Mammary epithelial cell (primary cell): ENCODE measurements at regions of chr6 and their contacts with region 1.

Region 1: DNA sequence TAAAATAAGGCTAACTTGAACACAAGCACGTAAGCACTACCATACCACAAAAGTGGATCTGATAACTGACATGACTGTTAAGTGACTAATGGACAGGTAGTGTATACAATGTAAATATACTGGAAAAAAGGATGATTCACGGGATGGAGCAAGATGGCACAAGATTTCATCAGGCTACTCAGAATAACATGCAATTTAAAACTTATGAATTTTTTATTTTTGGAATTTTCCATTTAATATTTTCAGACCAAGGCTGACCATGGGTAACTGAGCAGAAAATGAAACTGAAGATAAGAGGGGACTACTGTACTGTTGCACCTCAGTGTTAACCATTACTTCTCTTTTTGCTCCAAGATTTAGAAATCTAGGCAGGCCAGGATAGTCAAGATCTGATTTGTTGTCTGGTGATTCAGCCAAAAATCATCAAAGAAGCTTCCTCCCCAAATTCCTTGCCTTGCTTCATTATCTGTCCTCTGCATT is 45.4 kb downstream of the TPBG start:
- DNase-seq: peak; percentile 91
- H3K4me3 ChIP-seq: peak overlapping the region in 1 of 3 experiments; percentile 21
- H3K27ac ChIP-seq: peak overlapping the region; percentile 97
- H3K4me1 ChIP-seq: peaks cover 29% of the 10 kb centered on the region
- H3K27me3 ChIP-seq: no peaks in the 10 kb centered on the region
- CTCF ChIP-seq: no peak

Region 2: DNA sequence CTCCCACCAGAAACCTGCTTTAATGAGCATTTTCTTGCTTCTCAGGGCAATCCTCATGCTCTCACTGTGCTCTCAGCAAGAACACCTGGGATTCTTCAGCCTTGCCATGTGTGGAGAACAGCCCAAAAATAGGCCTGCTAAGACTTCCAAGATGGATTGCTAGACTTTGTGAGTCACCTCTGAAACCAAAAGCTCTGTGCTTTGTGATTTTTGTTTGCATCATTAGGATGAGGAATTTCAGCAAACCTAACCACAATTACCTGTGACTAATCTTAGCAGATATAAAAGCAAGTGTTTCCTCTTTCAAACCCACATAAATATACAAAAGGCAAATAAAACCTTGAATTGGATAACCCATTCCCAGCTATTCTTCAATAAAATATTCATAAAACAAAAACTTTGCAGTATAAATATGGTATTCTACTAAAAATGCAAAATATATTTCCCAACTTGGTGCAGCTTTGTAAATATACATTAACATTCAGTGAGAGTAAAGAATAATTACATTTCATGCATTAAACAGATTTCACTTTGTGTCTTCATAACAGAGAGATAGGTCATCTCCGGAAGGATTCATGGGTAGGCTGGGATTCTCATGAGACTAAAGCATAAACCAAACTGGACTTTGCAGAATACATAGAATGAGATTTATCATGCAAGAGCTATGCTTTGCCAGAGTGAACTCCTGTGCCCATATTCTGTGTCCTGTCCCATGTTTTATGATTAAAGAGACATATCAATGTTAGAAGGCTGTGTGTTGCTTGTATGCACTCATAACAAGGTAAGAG is 11.8 kb before region 1 on chr6:
- CTCF ChIA-PET with region 1: interaction called, 4 read pairs
- dilution Hi-C with region 1: no loop called
- in situ Hi-C with region 1: no loop called
- intact Hi-C with region 1: loop called (anchors 1 kb)
- DNase-seq: peak; percentile 96
- H3K4me3 ChIP-seq: peak overlapping the region in 1 of 3 experiments; percentile 24
- H3K27ac ChIP-seq: peak overlapping the region; percentile 77
- H3K4me1 ChIP-seq: peaks cover 31% of the 10 kb centered on the region
- H3K27me3 ChIP-seq: no peaks in the 10 kb centered on the region
- CTCF ChIP-seq: no peak

Region 3: DNA sequence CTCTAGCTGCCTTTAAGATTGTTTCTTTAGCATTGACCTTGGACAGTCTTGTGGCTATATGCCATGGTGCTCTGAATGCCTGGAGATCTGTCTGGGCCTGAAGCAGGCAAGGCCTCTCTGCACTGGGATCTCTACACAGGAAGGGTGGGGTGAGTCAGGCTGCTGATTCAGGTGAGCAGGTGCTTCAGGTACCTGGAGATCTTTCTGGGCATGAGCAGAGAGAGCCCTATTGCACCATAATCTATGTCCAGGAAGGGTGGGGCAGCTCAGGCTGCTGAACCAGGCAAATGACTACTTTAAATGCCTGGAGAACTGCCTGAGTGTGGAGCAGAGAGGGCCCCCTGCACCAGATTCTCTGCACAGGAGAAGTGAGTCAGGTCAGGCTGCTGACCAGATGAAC is 49.2 kb after region 1 on chr6:
- CTCF ChIA-PET with region 1: no interaction called
- dilution Hi-C with region 1: no loop called
- in situ Hi-C with region 1: no loop called
- intact Hi-C with region 1: loop called (anchors 1 kb)
- DNase-seq: peak; percentile 99
- H3K4me3 ChIP-seq: no peak overlapping the region
- H3K27ac ChIP-seq: peak overlapping the region; percentile 58
- H3K4me1 ChIP-seq: peaks cover 17% of the 10 kb centered on the region
- H3K27me3 ChIP-seq: no peaks in the 10 kb centered on the region
- CTCF ChIP-seq: no peak